HEK293 (cell line): ENCODE measurements at regions of chr11 and their contacts with region 1.

Region 1: DNA sequence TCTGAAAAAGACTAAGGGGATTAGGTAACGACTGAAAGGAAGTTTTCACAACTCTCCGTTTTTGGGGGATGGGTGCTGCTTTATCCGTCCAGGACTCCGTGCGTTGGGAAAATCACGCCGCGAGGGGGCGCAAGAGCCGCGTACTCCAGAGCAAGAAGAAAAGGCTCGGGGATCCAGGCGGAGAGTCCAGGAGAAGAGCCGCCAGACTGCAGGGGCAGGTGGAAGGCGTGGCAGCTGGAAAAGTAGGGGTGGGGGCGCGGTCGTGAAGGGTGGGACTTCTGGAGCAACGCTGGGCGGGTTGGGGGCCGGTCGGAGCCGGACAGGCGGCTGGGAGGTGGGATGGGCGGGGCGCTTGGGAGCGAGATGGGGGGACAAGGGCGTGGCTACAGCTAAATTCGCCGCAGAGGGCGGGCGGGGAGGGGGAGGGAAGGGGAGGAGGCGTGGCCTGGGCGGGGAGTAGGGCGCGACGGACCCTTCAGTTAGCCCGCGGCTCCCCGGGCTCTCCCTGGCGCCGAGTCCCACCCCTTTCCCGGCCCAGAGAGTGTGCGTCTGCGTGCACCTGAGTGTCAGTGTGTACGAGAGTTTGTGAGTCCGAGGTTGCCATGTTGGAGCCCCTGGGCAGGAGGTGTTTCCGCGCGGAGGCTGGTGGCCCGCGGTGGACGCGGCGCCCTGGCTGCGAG is 613 bp upstream of the ARHGEF17 start:
- H3K4me3 ChIP-seq: peak overlapping the region; percentile 57
- H3K27ac ChIP-seq: peak overlapping the region; percentile 80
- H3K4me1 ChIP-seq: 0 out of 2 replicates have a peak, but pooled peaks cover 3% of the 10 kb centered on the region
- CTCF ChIP-seq: peak; percentile 83

Region 2: GRCh38 chr11:73295231-73295995 is 12.1 kb before region 1 on chr11:
- CTCF ChIA-PET with region 1: interaction called, 75 read pairs
- POLR2A ChIA-PET with region 1: interaction called, 8 read pairs
- H3K4me3 ChIP-seq: no peak overlapping the region
- H3K27ac ChIP-seq: no peak overlapping the region
- H3K4me1 ChIP-seq: no peaks in the 10 kb centered on the region
- CTCF ChIP-seq: no peak

Region 3: GRCh38 chr11:73335204-73335923 is 27.9 kb after region 1 on chr11:
- CTCF ChIA-PET with region 1: interaction called, 185 read pairs
- POLR2A ChIA-PET with region 1: interaction called, 30 read pairs
- H3K4me3 ChIP-seq: no peak overlapping the region
- H3K27ac ChIP-seq: no peak overlapping the region; the same call in 1 of the 2 replicates
- H3K4me1 ChIP-seq: peaks cover 4% of the 10 kb centered on the region; the same call in 1 of the 2 replicates
- CTCF ChIP-seq: peak; percentile 73

Region 4: DNA sequence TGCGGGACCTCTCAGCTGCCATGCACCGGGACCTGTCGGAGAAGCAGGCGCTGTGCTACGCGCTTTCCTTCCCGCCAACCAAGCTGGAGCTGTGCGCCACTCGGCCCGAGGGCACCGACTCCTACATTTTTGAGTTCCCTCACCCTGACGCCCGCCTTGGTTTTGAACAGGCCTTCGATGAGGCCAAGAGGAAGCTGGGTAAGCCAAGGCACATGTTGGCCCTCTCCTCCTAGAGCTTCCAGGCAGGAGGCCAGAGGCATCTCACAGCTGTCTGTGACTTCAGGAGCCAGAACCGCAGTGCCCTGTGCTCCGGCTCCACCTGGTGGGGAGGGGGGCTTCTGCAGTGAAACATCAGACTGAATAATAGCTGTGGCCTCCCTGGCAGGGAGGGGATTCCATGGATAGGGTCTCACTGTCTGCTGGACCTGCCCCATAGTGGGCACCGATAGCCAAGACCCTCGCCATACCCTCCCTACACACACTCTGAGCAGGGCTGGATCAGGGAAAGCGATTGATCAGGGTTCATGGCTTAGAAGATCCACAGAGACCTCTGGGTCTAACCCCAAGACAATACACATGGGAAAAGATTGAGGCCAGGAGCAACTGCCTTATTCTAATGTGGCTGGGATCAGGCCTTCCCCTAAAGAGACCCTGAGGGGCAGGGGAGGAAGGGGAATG is 53.0 kb after region 1 on chr11:
- CTCF ChIA-PET with region 1: interaction called, 10 read pairs
- POLR2A ChIA-PET with region 1: no interaction called
- H3K4me3 ChIP-seq: no peak overlapping the region
- H3K27ac ChIP-seq: no peak overlapping the region
- H3K4me1 ChIP-seq: no peaks in the 10 kb centered on the region
- CTCF ChIP-seq: peak; percentile 53; the same call in 1 of the 2 replicates

Region 5: GRCh38 chr11:73393479-73394380 is 86.3 kb after region 1 on chr11:
- CTCF ChIA-PET with region 1: interaction called, 25 read pairs
- POLR2A ChIA-PET with region 1: no interaction called
- H3K4me3 ChIP-seq: no peak overlapping the region
- H3K27ac ChIP-seq: no peak overlapping the region
- H3K4me1 ChIP-seq: no peaks in the 10 kb centered on the region
- CTCF ChIP-seq: peak; percentile 52; the same call in 1 of the 2 replicates